ENCODE measurements at regions of chr1 and their contacts with region 1.

Region 1: DNA sequence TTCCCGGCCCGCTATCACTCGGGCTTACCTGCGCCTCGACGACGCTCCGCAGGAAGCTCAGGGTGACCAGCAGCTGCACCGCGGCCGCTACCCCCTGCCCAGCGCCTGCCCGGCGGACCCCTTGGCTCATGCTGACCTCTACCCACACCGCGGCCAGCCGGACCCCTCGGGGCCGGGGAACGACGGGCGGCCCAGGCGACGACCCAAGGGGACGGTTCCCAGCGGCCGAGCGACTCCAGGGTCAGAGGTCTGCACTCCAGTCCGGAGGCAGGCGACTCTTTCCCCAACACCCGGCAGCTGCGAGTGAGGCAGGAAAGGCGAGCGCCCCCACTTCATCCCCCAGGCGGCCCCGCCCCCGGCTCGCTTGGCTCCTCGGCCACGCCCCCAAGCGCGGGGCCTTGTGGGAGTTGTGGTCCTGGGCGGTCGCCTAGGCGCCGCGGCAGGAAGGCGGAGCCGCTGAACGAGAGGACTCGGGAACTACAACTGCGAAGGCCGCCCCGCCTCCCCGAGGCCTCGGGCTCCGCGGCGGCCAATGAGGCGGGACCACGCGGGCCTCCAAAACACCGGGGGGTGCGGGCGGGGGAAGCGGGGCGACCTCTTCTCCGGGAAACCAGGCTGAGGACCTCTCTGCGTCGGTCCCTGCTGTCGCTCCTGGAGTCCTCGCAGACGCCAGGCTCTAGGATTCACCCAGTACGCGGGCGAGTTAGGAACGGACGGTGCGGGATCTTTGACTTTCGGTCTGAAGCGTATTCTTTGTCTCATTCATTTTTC is at the start of gene ERO1B:
- DNase-seq: peak; percentile 99
- H3K4me3 ChIP-seq: peak within 1 kb of the TSS; percentile 81 to 98 (median 97)
- H3K27ac ChIP-seq: peak within 1 kb of the TSS; percentile 73 to 92 (median 85)
- H3K4me1 ChIP-seq: peaks cover 6 to 10% of the 10 kb centered on the region in 2 donors
- H3K27me3 ChIP-seq: no peaks in the 10 kb centered on the region
- CTCF ChIP-seq: no peak
- POLR2A ChIP-seq: peak; percentile 92 to 99
- total RNA-seq, gene ERO1B: 29.8 to 60.1 (median 38.3) TPM

Region 2: GRCh38 chr1:236214761-236215160 is 67.1 kb before region 1 on chr1:
- intact Hi-C with region 1: no loop called
- DNase-seq: no peak
- H3K4me3 ChIP-seq: no peak overlapping the region
- H3K27ac ChIP-seq: no peak overlapping the region
- H3K4me1 ChIP-seq: no peaks in the 10 kb centered on the region
- H3K27me3 ChIP-seq: no peaks in the 10 kb centered on the region
- CTCF ChIP-seq: no peak
- POLR2A ChIP-seq: no peak

Region 3: DNA sequence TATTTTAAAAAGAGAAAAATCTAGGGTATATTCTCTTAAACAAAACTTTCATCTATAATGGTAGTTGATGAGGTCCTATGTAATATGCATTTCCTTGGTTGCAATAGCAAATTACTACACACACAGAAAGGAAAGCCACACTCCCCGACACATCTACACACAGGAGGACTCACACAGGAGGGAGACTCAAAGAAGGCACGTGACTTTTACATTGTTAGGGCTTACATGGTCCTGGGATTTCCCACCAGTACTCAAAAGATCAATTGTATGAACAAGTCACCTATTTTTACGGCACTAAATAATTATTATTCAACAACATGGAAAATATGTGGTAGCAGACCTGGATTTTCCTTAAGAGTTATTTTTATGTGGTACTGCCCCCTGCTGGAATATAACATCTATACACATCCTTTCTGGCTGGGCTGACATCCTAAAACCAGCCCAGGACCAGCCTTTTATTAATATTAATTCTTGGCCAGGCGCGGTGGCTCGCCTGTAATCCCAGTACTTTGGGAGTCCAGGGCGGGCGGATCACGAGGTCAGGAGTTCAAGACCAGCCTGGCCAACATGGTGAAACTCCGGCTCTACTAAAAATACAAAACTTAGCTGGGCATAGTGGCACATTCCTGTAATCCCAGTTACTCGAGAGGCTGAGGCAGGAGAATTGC is 208.0 kb after region 1 on chr1:
- intact Hi-C with region 1: loop called (anchors 10 kb)
- DNase-seq: peak in 1 of 2 donors; percentile 32
- H3K4me3 ChIP-seq: no peak overlapping the region
- H3K27ac ChIP-seq: no peak overlapping the region
- H3K4me1 ChIP-seq: peaks cover 0 to 3% of the 10 kb centered on the region in 2 donors
- H3K27me3 ChIP-seq: no peaks in the 10 kb centered on the region
- CTCF ChIP-seq: peak in 5 of 6 experiments; percentile 55 to 66 (median 57)
- POLR2A ChIP-seq: no peak